ENCODE measurements at regions of chr20 and their contacts with region 1.

Region 1: DNA sequence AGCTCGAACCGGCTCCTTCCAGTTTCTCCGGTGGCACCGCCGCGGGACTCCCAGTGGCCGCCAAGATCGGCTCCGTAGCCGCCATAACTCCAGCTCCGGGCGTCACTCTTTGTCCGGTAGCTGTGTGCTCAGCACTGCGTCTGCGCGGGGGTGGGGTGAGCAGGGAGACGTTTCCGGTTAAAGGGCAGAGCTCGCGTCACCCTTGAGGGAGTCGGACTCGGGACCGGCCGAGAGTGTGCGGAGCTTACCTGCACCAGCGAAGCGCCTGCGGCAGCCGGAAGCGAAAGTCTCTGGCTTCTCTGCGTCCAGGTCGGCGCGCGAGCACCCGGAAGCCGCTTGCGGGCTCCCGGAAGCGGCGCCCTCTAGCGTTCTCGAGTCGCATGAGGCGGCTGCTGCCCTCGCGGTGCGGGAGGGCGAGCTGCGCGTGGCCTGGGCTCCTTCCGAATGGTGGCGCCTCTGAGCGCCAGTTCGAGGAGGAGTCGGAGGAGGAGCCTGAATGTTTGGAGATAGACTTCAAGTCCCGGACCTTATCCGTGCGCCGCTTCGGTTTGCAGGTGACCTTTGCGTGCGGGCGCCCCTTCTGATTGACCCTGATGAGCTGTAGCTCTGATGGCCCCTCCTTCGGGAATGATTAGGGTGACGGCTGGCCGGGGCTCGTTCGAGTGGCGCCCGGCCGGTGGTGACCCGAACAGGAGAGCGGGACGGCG is at the start of gene SCAND1:
- DNase-seq: peak; percentile 93 to 99 (median 97)
- ATAC-seq: peak; percentile 86
- H3K4me3 Mint-ChIP-seq: peak within 1 kb of the TSS; percentile 89 to 100 (median 99)
- H3K27ac Mint-ChIP-seq: peak within 1 kb of the TSS; percentile 94 to 100 (median 99)
- H3K4me1 Mint-ChIP-seq: peaks cover 6 to 31% (median 26%) of the 10 kb centered on the region in 4 donors
- H3K27me3 Mint-ChIP-seq: no peaks in the 10 kb centered on the region
- polyA plus RNA-seq, gene SCAND1: 156 to 206 (median 176) TPM

Region 2: GRCh38 chr20:34111702-34112599 is 1842.4 kb before region 1 on chr20 and contains the start of gene EIF2S2:
- POLR2A ChIA-PET with region 1: interaction called, 10 read pairs
- DNase-seq: peak; percentile 91 to 98 (median 94)
- ATAC-seq: peak; percentile 91 to 92
- H3K4me3 Mint-ChIP-seq: peak within 1 kb of the TSS; percentile 90 to 99 (median 96)
- H3K27ac Mint-ChIP-seq: peak within 1 kb of the TSS; percentile 96 to 100 (median 98)
- H3K4me1 Mint-ChIP-seq: peaks cover 23 to 51% (median 43%) of the 10 kb centered on the region in 4 donors
- H3K27me3 Mint-ChIP-seq: no peaks in the 10 kb centered on the region
- polyA plus RNA-seq, gene EIF2S2: 17.5 to 21.6 (median 20.2) TPM

Region 3: GRCh38 chr20:35490736-35491181 is 463.6 kb before region 1 on chr20:
- POLR2A ChIA-PET with region 1: interaction called, 11 read pairs
- DNase-seq: peak; percentile 24 to 84 (median 64)
- ATAC-seq: peak; percentile 99 to 100
- H3K4me3 Mint-ChIP-seq: peak overlapping the region; percentile 96 to 100 (median 99)
- H3K27ac Mint-ChIP-seq: peak overlapping the region; percentile 97 to 100 (median 99)
- H3K4me1 Mint-ChIP-seq: peaks cover 31 to 81% (median 75%) of the 10 kb centered on the region in 4 donors
- H3K27me3 Mint-ChIP-seq: no peaks in the 10 kb centered on the region

Region 4: DNA sequence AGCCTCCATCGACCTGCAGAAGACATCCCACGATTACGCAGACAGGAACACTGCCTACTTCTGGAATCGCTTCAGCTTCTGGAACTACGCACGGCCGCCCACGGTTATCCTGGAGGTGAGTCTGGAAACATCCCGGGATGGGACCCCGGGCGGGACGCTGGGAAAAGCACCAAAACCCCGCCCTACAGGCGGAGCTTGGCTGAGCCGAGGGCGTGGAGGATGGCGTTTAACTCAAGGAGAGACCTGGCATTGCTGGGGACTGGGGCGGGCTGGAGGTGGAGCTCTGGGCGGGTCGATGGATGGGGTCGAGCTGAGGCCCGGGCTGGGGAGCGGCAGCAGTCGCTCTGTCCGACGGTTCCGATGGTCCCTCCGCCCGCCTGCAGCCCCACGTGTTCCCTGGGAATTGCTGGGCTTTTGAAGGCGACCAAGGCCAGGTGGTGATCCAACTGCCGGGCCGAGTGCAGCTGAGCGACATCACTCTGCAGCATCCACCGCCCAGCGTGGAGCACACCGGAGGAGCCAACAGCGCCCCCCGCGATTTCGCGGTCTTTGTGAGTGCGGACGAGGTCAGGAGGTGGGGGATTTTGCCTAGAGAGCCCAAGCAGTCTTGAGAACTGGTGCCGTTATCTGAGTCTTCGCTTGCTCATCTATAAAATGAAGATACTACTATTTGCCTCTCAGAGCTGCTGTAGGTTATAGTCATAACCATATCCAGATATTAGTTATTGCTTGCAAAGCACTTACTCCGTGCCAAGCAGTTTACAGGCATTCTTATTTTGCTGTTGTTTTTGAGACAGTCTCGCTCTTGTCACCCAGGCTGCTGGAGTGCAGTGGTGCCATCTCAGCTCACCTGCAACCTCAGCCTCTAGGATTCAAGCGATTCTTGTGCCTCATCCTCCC is 334.9 kb before region 1 on chr20:
- POLR2A ChIA-PET with region 1: interaction called, 11 read pairs
- DNase-seq: peak; percentile 65 to 83 (median 71)
- ATAC-seq: peak; percentile 27 to 33
- H3K4me3 Mint-ChIP-seq: peak overlapping the region; percentile 87 to 93 (median 89)
- H3K27ac Mint-ChIP-seq: peak overlapping the region; percentile 66 to 95 (median 87)
- H3K4me1 Mint-ChIP-seq: peaks cover 16 to 44% (median 39%) of the 10 kb centered on the region in 4 donors
- H3K27me3 Mint-ChIP-seq: no peaks in the 10 kb centered on the region

Region 5: GRCh38 chr20:35699127-35699975 is 255.0 kb before region 1 on chr20 and contains the starts of genes NFS1 and ROMO1:
- POLR2A ChIA-PET with region 1: interaction called, 10 read pairs
- DNase-seq: peak; percentile 73 to 92 (median 86)
- ATAC-seq: peak; percentile 83 to 92
- H3K4me3 Mint-ChIP-seq: peak within 1 kb of the TSS; percentile 85 to 98 (median 94)
- H3K27ac Mint-ChIP-seq: peak within 1 kb of the TSS; percentile 93 to 99 (median 97)
- H3K4me1 Mint-ChIP-seq: peaks cover 23 to 47% (median 38%) of the 10 kb centered on the region in 4 donors
- H3K27me3 Mint-ChIP-seq: no peaks in the 10 kb centered on the region
- polyA plus RNA-seq, gene NFS1: 8.6 to 16.6 (median 14.1) TPM
- polyA plus RNA-seq, gene ROMO1: 305 to 421 (median 381) TPM

Region 6: DNA sequence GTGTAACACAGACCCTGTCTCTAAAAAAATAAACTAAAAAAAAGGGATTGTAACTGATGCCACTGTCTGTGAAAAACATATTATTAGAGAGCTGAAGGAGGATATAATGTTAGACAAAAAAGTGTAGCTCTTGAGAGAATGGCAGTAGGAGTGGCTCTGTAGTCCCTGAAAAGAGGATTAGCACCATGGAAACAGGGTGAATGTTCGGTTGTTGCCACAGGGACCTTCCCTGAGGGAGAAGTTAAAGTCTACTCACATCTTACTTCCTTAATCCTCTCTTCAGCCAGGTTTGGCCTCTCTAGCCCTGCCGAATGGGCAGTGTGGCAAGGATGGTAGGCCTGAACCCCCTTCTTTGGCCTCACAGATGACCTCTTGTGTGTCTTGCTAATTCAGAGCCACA is 12.1 kb before region 1 on chr20:
- POLR2A ChIA-PET with region 1: interaction called, 11 read pairs
- DNase-seq: no peak
- ATAC-seq: no peak
- H3K4me3 Mint-ChIP-seq: no peak overlapping the region
- H3K27ac Mint-ChIP-seq: peak overlapping the region in 4 of 10 donors; percentile 11 to 87 (median 34)
- H3K4me1 Mint-ChIP-seq: peaks cover 0 to 9% (median 3%) of the 10 kb centered on the region in 4 donors
- H3K27me3 Mint-ChIP-seq: no peaks in the 10 kb centered on the region